Activated B cell treated with CpG ODN at 0.5 μM for 24 hours (primary cell): ENCODE measurements at regions of chr19 and their contacts with region 1.

Region 1: DNA sequence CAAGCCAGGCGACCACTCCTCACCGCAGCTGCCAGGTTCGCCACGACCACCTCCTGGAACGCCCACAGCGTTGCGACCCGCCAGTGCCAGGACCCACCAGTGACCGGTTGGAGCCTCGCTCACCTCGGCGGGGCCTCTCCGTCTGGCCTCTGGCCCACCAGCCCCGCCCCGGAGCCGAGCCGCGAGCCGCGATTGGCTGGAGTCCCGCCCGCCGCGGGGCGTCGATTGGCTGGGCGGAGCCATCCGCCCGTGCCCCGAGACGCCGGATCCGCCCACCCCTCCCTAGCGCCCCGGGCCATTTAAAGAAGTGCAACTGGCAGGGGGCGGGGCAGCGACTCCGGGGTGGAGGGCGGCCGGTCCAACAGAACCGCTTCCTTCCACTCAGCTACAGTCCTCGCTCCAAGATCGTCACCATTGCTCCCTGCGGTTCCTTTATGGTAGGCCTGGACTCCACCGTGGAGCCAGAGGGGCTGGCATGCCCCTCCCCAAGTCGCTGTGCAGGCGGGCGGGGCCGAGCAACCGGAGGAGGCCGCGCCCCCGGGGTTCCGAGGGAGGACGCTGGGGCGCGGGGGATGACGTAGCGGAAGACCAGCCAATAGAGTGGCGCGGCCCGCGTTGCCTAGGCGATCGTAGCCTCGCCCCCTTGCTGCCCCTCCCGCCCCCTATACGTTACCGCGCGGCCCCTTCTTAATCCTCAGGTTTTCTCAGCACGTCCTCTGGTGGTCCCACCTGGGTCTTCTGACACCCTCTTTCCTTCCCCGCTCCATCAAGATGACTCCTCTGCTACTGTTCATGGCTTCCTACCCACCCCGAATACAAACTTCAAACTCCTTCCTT is at the start of gene SERTAD3:
- DNase-seq: peak; percentile 98
- ATAC-seq: peak; percentile 68
- H3K4me3 Mint-ChIP-seq: peak within 1 kb of the TSS; percentile 98
- H3K27ac Mint-ChIP-seq: peak within 1 kb of the TSS; percentile 97
- H3K4me1 Mint-ChIP-seq: peaks cover 26% of the 10 kb centered on the region
- H3K27me3 Mint-ChIP-seq: no peaks in the 10 kb centered on the region
- CTCF ChIP-seq: no peak
- total RNA-seq, gene SERTAD3: 43.5 and 48.4 TPM in 2 replicates

Region 2: GRCh38 chr19:40305403-40305802 is 139.0 kb before region 1 on chr19:
- CTCF ChIA-PET with region 1: interaction called, 13 read pairs
- POLR2A ChIA-PET with region 1: interaction called, 4 read pairs
- intact Hi-C with region 1: loop called (anchors 1 kb)
- DNase-seq: peak; percentile 44
- ATAC-seq: peak; percentile 69
- H3K4me3 Mint-ChIP-seq: no peak overlapping the region
- H3K27ac Mint-ChIP-seq: no peak overlapping the region
- H3K4me1 Mint-ChIP-seq: peaks cover 2% of the 10 kb centered on the region
- H3K27me3 Mint-ChIP-seq: no peaks in the 10 kb centered on the region
- CTCF ChIP-seq: no peak

Region 3: DNA sequence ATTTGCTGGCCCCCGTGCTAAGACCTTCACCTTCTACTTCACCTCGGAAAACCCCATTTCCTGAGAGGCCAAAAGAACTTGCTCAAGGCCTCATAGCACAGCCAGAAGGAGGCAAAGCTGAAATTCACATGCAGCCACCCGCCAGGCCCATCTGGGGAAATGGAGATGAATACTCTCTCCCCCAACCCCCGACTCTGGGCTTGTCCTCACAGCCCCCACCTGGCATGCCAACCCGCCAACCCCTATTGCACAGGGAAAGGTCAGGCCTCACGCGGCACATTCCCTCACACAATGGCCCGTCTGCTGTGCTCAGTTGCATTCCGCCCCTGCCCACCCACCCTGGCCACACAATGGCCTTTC is 34.4 kb before region 1 on chr19:
- CTCF ChIA-PET with region 1: no interaction called
- POLR2A ChIA-PET with region 1: no interaction called
- intact Hi-C with region 1: no loop called
- DNase-seq: no peak
- ATAC-seq: peak; percentile 45
- H3K4me3 Mint-ChIP-seq: no peak overlapping the region
- H3K27ac Mint-ChIP-seq: peak overlapping the region; percentile 6
- H3K4me1 Mint-ChIP-seq: peaks cover 29% of the 10 kb centered on the region
- H3K27me3 Mint-ChIP-seq: no peaks in the 10 kb centered on the region
- CTCF ChIP-seq: no peak

Region 4: DNA sequence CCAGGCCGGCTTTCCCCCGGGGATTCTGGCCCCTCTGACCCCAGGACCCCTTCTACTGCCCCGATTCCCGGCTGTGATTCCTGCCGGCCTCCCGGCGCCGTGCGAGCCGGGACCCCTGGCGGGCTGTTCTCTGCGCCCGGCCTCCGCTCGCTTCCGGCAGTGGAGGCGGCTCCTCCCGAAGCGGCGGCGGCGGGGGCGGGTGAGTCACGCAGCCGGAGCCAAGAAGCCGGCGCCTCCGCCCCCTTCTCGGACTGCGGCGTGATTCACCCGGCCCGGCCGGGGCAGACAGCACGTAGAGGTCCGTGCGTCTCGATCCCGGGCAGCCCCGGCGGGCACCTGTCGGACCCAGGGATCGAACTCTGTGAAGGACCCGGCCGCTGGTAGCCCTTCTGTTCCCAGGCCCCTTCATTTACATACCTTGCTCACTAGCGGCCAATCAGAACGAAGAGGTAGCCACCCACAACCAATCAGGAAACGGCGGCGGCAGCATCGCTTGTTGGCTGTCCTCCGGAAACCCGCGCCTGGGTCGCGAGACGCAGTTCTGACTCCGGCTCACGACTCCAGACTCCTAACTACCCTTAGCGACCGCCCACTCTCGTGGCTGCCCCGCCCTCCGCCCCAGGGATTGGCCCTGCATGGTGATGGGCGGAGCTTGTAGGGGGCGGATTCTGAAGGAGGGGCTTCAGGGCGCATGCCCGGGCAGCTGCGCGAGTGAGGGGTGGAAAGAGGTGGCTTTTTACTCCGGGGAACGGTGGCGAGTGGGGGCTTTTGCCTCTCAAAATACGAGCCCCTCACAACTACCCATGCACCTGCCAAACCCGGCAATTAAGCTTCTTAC is 18.7 kb before region 1 on chr19 and contains the start of gene SERTAD1:
- CTCF ChIA-PET with region 1: interaction called, 49 read pairs
- POLR2A ChIA-PET with region 1: interaction called, 104 read pairs
- intact Hi-C with region 1: loop called (anchors 1 kb)
- DNase-seq: peak; percentile 100
- ATAC-seq: peak; percentile 90
- H3K4me3 Mint-ChIP-seq: peak within 1 kb of the TSS; percentile 93
- H3K27ac Mint-ChIP-seq: peak within 1 kb of the TSS; percentile 93
- H3K4me1 Mint-ChIP-seq: peaks cover 31% of the 10 kb centered on the region
- H3K27me3 Mint-ChIP-seq: no peaks in the 10 kb centered on the region
- CTCF ChIP-seq: no peak
- total RNA-seq, gene SERTAD1: 13.4 and 13.9 TPM in 2 replicates

Region 5: GRCh38 chr19:40570313-40571004 is 126.0 kb after region 1 on chr19:
- CTCF ChIA-PET with region 1: no interaction called
- POLR2A ChIA-PET with region 1: interaction called, 3 read pairs
- intact Hi-C with region 1: loop called (anchors 1 kb)
- DNase-seq: peak; percentile 98
- ATAC-seq: peak; percentile 95
- H3K4me3 Mint-ChIP-seq: peak overlapping the region; percentile 70
- H3K27ac Mint-ChIP-seq: peak overlapping the region; percentile 81
- H3K4me1 Mint-ChIP-seq: peaks cover 22% of the 10 kb centered on the region
- H3K27me3 Mint-ChIP-seq: peaks cover 13% of the 10 kb centered on the region
- CTCF ChIP-seq: no peak

Region 6: GRCh38 chr19:40750059-40750873 is 305.9 kb after region 1 on chr19 and contains the start of gene ACTMAP:
- CTCF ChIA-PET with region 1: no interaction called
- POLR2A ChIA-PET with region 1: interaction called, 4 read pairs
- intact Hi-C with region 1: loop called (anchors 1 kb)
- DNase-seq: peak; percentile 97
- ATAC-seq: peak; percentile 88
- H3K4me3 Mint-ChIP-seq: peak within 1 kb of the TSS; percentile 97
- H3K27ac Mint-ChIP-seq: peak within 1 kb of the TSS; percentile 96
- H3K4me1 Mint-ChIP-seq: peaks cover 49% of the 10 kb centered on the region
- H3K27me3 Mint-ChIP-seq: no peaks in the 10 kb centered on the region
- CTCF ChIP-seq: no peak
- total RNA-seq, gene ACTMAP: 8.5 and 12.7 TPM in 2 replicates